ENCODE measurements at regions of chr3 and their contacts with region 1.

Region 1: GRCh38 chr3:183158551-183159006 is 4.0 kb downstream of the LAMP3 start:
- DNase-seq: peak; percentile 71
- H3K4me3 Mint-ChIP-seq: peak overlapping the region; percentile 44
- H3K27ac Mint-ChIP-seq: peak overlapping the region; percentile 81
- H3K4me1 Mint-ChIP-seq: peaks cover 39% of the 10 kb centered on the region
- H3K27me3 Mint-ChIP-seq: no peaks in the 10 kb centered on the region

Region 2: GRCh38 chr3:183178629-183179549 is 20.3 kb after region 1 on chr3:
- intact Hi-C with region 1: loop called (anchors 2 kb)
- DNase-seq: peak; percentile 79
- H3K4me3 Mint-ChIP-seq: peak overlapping the region; percentile 86
- H3K27ac Mint-ChIP-seq: no peak overlapping the region
- H3K4me1 Mint-ChIP-seq: peaks cover 10% of the 10 kb centered on the region
- H3K27me3 Mint-ChIP-seq: peaks cover 37% of the 10 kb centered on the region

Region 3: GRCh38 chr3:183224180-183224970 is 65.8 kb after region 1 on chr3:
- intact Hi-C with region 1: loop called (anchors 1 kb)
- DNase-seq: peak; percentile 85
- H3K4me3 Mint-ChIP-seq: peak overlapping the region; percentile 74
- H3K27ac Mint-ChIP-seq: peak overlapping the region; percentile 73
- H3K4me1 Mint-ChIP-seq: peaks cover 32% of the 10 kb centered on the region
- H3K27me3 Mint-ChIP-seq: no peaks in the 10 kb centered on the region

Region 4: GRCh38 chr3:183427876-183428446 is 269.4 kb after region 1 on chr3:
- intact Hi-C with region 1: loop called (anchors 1 kb)
- DNase-seq: peak; percentile 82
- H3K4me3 Mint-ChIP-seq: peak overlapping the region; percentile 82
- H3K27ac Mint-ChIP-seq: peak overlapping the region; percentile 57
- H3K4me1 Mint-ChIP-seq: peaks cover 35% of the 10 kb centered on the region
- H3K27me3 Mint-ChIP-seq: peaks cover 2% of the 10 kb centered on the region